Activated CD8-positive, alpha-beta T cell treated with anti-CD3 and anti-CD28 coated beads for 36 hours (primary cell): ENCODE measurements at regions of chr2 and their contacts with region 1.

Region 1: GRCh38 chr2:148524519-148524919 is 120.0 kb upstream of the EPC2 start:
- DNase-seq: peak; percentile 76
- ATAC-seq: peak; percentile 87
- H3K4me3 Mint-ChIP-seq: no peak overlapping the region
- H3K27ac Mint-ChIP-seq: peak overlapping the region; percentile 86
- H3K4me1 Mint-ChIP-seq: peaks cover 85% of the 10 kb centered on the region
- H3K27me3 Mint-ChIP-seq: no peaks in the 10 kb centered on the region
- CTCF ChIP-seq: no peak

Region 2: GRCh38 chr2:148509288-148509902 is 15.1 kb before region 1 on chr2:
- CTCF ChIA-PET with region 1: interaction called, 71 read pairs
- POLR2A ChIA-PET with region 1: interaction called, 13 read pairs
- intact Hi-C with region 1: no loop called
- DNase-seq: peak; percentile 95
- ATAC-seq: peak; percentile 100
- H3K4me3 Mint-ChIP-seq: peak overlapping the region; percentile 66
- H3K27ac Mint-ChIP-seq: peak overlapping the region; percentile 79
- H3K4me1 Mint-ChIP-seq: peaks cover 23% of the 10 kb centered on the region
- H3K27me3 Mint-ChIP-seq: no peaks in the 10 kb centered on the region
- CTCF ChIP-seq: peak; percentile 91

Region 3: GRCh38 chr2:148540022-148540421 is 15.5 kb after region 1 on chr2:
- CTCF ChIA-PET with region 1: interaction called, 9 read pairs
- POLR2A ChIA-PET with region 1: interaction called, 15 read pairs
- intact Hi-C with region 1: no loop called
- DNase-seq: peak; percentile 58
- ATAC-seq: peak; percentile 87
- H3K4me3 Mint-ChIP-seq: peak overlapping the region; percentile 25
- H3K27ac Mint-ChIP-seq: peak overlapping the region; percentile 84
- H3K4me1 Mint-ChIP-seq: peaks cover 38% of the 10 kb centered on the region
- H3K27me3 Mint-ChIP-seq: no peaks in the 10 kb centered on the region
- CTCF ChIP-seq: no peak

Region 4: DNA sequence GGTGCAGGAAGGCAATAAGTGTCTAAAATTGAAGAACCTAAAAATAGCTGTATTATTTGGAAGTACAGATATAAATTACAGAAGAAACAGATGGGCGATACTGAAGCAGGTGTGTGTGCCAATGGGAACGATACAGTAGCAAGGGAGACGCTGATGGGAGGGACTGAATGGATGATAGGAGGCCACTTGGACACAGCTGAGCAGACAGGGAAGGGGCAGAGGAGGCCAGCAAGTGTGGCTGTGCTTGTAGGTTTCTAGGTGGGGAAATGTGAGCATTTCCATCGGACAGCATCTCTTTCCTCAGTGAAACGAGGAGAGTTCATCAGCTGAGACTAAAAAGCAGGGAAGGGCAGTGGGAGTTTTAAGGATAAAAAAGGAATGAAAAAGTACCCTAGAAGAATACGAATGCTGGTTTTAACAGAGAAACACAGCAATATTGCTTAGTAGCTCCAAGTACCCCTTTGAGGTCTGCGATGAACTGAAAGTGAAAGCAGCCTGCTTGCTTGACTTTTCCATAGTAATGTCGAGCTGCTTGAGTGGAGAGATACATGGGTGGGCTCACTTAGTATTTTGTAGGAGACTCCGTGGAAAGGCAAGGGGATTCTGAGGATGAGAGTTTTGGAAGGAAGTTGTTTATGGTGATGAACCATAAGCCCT is 28.3 kb after region 1 on chr2:
- CTCF ChIA-PET with region 1: interaction called, 6 read pairs
- POLR2A ChIA-PET with region 1: interaction called, 27 read pairs
- intact Hi-C with region 1: no loop called
- DNase-seq: peak; percentile 51
- ATAC-seq: peak; percentile 86
- H3K4me3 Mint-ChIP-seq: no peak overlapping the region
- H3K27ac Mint-ChIP-seq: no peak overlapping the region
- H3K4me1 Mint-ChIP-seq: peaks cover 5% of the 10 kb centered on the region
- H3K27me3 Mint-ChIP-seq: no peaks in the 10 kb centered on the region
- CTCF ChIP-seq: no peak

Region 5: DNA sequence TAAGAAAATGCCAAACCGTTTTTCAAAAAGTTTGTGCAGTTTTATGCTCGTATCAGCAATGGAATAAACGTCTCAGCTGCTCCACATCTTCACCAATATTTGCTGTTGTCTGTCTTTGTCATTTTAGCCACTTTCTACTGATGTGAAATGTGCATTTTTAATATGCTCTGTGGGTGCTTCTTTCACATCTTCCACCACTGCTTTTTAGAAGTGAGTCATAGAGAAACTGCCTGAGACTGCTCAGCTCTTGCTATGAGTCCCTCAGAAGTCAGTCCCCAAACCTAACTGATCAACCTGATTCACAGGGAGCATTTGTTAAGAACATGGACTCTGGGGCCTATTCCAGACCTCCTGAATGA is 79.0 kb after region 1 on chr2:
- CTCF ChIA-PET with region 1: no interaction called
- POLR2A ChIA-PET with region 1: interaction called, 4 read pairs
- intact Hi-C with region 1: loop called (anchors 5 kb)
- DNase-seq: peak; percentile 59
- ATAC-seq: peak; percentile 91
- H3K4me3 Mint-ChIP-seq: peak overlapping the region; percentile 42
- H3K27ac Mint-ChIP-seq: peak overlapping the region; percentile 96
- H3K4me1 Mint-ChIP-seq: peaks cover 17% of the 10 kb centered on the region
- H3K27me3 Mint-ChIP-seq: peaks cover 3% of the 10 kb centered on the region
- CTCF ChIP-seq: no peak

Region 6: GRCh38 chr2:148644883-148645538 is 120.5 kb after region 1 on chr2:
- CTCF ChIA-PET with region 1: interaction called, 4 read pairs
- POLR2A ChIA-PET with region 1: interaction called, 4 read pairs
- intact Hi-C with region 1: loop called (anchors 5 kb)
- DNase-seq: peak; percentile 93
- ATAC-seq: peak; percentile 83
- H3K4me3 Mint-ChIP-seq: peak overlapping the region; percentile 84
- H3K27ac Mint-ChIP-seq: peak overlapping the region; percentile 93
- H3K4me1 Mint-ChIP-seq: peaks cover 39% of the 10 kb centered on the region
- H3K27me3 Mint-ChIP-seq: peaks cover 5% of the 10 kb centered on the region
- CTCF ChIP-seq: no peak

Region 7: DNA sequence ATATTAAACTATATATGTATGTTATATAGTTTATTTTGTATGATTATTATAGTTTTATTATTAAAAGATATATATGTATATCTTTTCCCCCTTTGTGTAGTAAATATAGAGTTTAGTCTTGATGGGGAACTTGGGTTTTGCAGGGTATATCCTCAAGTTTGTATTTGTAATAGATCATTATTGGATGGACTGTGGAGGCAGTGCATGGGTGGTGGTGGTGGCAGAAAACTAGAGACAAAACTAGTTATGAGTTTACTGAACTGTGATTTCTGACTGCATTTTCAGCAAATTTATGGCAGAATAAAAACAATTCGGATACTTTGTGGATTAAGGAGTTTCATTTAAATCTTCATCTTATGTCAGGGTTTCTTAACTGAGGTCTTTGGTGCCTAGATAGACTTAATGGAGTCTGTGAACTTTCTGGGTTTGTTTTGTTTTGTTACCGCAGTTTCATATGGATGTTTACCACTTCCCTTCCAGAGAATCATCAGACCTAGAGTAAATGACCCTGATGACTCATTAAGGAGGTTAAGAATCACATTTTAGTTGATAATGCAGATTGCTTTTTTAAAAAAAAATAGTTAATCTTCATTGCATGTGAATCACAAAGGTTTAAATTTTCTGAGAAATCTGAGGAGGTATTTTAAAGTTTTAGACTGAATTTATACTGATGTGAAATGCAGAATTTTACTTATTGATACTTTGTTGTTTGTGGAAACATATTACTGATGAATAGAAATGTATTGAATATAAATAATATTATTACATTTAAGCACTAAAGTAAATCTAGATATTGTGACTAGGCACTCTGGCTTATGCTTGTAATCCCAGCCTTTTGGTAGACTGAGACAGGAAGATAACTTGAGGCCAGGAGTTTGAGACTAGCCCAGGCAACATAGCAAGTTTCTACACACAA is 134.5 kb after region 1 on chr2:
- CTCF ChIA-PET with region 1: interaction called, 3 read pairs
- POLR2A ChIA-PET with region 1: interaction called, 3 read pairs
- intact Hi-C with region 1: loop called (anchors 5 kb)
- DNase-seq: peak; percentile 23
- ATAC-seq: peak; percentile 77
- H3K4me3 Mint-ChIP-seq: peak overlapping the region; percentile 47
- H3K27ac Mint-ChIP-seq: peak overlapping the region; percentile 78
- H3K4me1 Mint-ChIP-seq: peaks cover 71% of the 10 kb centered on the region
- H3K27me3 Mint-ChIP-seq: no peaks in the 10 kb centered on the region
- CTCF ChIP-seq: no peak